ENCODE measurements at regions of chr20 and their contacts with region 1.

Region 1: GRCh38 chr20:44388466-44389023 is 33.0 kb downstream of the HNF4A start:
- DNase-seq: peak; percentile 69 to 84
- ATAC-seq: peak; percentile 77 to 87
- H3K4me3 ChIP-seq: no peak overlapping the region
- H3K27ac ChIP-seq: peak overlapping the region; percentile 55 to 73
- H3K4me1 ChIP-seq: peaks cover 64% of the 10 kb centered on the region
- CTCF ChIP-seq: peak; percentile 93
- EP300 ChIP-seq: no peak
- POLR2A ChIP-seq: no peak
- RAD21 ChIP-seq: peak; percentile 91 to 95

Region 2: DNA sequence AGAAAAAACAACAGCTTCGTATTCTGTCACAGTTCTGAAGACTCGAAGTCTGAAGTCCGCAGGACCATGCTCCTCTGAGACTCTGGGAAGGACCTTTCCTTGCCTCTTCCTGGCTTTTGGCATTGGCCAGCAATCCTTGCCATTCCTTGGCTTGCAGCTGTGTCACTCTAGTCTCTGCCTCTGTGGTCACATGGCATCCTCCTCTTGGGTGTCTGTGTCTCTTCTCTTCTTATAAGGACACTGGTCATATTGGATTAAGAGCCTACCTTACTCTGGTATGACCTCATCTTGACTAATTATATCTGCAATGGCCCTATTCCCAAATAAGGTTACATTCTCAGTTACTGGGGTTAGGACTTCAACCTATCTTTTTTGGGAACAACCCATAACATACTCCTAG is 611.9 kb before region 1 on chr20:
- CTCF ChIA-PET with region 1: no interaction called
- POLR2A ChIA-PET with region 1: no interaction called
- DNase-seq: no peak
- ATAC-seq: no peak
- H3K4me3 ChIP-seq: no peak overlapping the region
- H3K27ac ChIP-seq: no peak overlapping the region
- H3K4me1 ChIP-seq: no peaks in the 10 kb centered on the region
- CTCF ChIP-seq: no peak
- EP300 ChIP-seq: no peak
- POLR2A ChIP-seq: no peak
- RAD21 ChIP-seq: no peak

Region 3: DNA sequence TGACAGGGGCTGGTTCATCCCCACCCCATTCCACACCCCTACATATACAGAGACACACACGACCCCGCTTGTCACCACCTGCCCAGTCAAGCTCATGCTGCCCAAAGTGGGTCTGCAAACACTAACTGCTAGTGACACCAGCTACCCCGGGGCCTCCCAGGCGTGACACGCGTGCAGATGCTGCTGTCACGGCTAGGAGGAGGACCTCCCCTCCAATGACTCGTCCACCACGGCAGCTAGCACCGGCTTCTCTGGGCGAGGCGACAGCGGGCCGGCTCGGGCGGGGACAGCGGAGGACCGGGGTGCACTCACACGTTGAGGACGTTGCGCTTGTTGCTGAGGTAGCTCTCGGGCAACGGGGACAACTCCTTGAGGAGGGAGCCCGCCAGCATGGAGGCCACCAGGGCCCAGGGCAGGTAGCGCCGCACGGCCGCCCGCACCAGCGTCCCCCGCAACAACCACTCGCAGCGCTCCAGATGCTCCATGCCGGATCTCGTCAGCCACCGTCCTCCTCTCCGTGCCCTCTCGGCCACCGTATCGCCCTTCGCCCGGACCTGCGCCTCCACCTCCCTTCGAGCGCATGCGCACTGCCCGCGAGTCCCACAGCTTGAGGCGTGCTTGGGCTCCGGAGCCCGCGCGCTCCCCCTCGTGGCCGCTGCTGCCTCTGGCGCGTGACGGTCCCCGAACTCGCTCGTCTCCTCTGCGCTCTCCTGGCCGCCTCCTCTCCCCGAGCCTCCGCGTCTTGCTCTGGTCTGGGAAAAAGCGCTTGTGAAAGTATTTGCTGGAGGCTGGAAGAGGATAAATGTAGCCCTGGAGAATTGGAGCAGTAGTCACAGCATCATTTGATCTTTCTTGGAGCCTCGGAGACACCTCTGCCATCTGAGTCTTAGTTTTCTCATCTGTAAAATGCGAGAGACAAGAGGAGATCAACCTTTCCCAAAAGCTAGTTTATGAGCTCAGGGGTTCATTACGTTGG is 77.6 kb before region 1 on chr20 and contains the start of gene FITM2:
- CTCF ChIA-PET with region 1: interaction called, 69 read pairs
- POLR2A ChIA-PET with region 1: no interaction called
- DNase-seq: peak; percentile 96 to 98
- ATAC-seq: peak; percentile 95 to 98
- H3K4me3 ChIP-seq: peak within 1 kb of the TSS; percentile 89
- H3K27ac ChIP-seq: peak within 1 kb of the TSS; percentile 92 to 95
- H3K4me1 ChIP-seq: peaks cover 7% of the 10 kb centered on the region; the same call in 2 of the 3 replicates
- CTCF ChIP-seq: peak; percentile 89
- EP300 ChIP-seq: no peak
- POLR2A ChIP-seq: peak; percentile 88
- RAD21 ChIP-seq: peak; percentile 79 to 88
- polyA plus RNA-seq, gene FITM2: 13.1 and 15.2 TPM in 2 replicates

Region 4: DNA sequence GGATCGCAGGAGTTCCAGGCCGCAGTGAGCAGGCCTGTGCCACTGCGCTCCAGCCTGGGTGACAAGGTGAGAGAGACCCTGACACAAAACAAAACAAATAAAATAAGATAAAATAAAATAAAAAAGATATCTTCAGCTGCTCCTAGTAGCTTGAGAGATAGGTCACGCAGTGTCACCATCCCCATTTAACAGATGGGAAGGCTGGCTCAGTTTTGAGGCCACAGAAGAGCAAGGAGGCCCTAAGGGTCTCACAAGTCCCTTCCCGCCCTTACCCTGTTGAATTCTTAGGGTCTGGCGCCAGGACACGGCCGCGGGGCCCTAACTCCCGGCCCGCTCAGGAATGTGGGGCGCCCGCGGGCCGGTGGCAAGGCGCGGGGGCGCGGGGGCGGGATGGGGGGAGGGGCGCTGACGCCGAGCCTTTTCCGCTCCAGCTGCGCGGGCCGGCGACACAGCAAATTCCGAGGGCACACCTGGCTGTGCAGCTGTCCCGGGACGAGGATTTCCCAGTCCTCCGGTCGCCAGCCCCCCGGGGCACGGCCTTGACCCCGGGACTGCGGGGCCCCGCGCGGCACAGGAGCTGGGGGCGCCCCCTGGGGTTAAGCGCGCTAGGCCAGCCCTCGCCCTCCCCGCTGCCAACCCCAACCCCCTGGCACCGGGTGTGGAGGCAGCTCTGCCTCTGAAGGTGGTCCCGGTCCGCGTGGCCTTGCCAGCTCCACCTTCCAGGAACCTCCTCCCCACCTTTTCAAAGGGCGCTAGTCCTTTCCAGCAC is 62.0 kb before region 1 on chr20:
- CTCF ChIA-PET with region 1: interaction called, 28 read pairs
- POLR2A ChIA-PET with region 1: no interaction called
- DNase-seq: no peak
- ATAC-seq: peak in 1 of 2 experiments; percentile 28; a peak in 1 of 6 replicates
- H3K4me3 ChIP-seq: peak overlapping the region; percentile 24
- H3K27ac ChIP-seq: peak overlapping the region; percentile 61 to 78
- H3K4me1 ChIP-seq: peaks cover 14% of the 10 kb centered on the region
- CTCF ChIP-seq: no peak; the same call in 2 of the 3 replicates
- EP300 ChIP-seq: no peak
- POLR2A ChIP-seq: no peak
- RAD21 ChIP-seq: no peak

Region 5: GRCh38 chr20:44370639-44371220 is 17.8 kb before region 1 on chr20:
- CTCF ChIA-PET with region 1: interaction called, 81 read pairs
- POLR2A ChIA-PET with region 1: no interaction called
- DNase-seq: peak; percentile 90 to 97
- ATAC-seq: peak; percentile 99 to 100
- H3K4me3 ChIP-seq: no peak overlapping the region
- H3K27ac ChIP-seq: peak overlapping the region; percentile 90 to 95
- H3K4me1 ChIP-seq: peaks cover 61% of the 10 kb centered on the region
- CTCF ChIP-seq: no peak
- EP300 ChIP-seq: peak; percentile 72
- POLR2A ChIP-seq: peak; percentile 32; the same call in 1 of the 2 replicates
- RAD21 ChIP-seq: peak in 1 of 2 experiments; percentile 18; a peak in 2 of 5 replicates

Region 6: GRCh38 chr20:44460795-44461141 is 72.2 kb after region 1 on chr20:
- CTCF ChIA-PET with region 1: interaction called, 43 read pairs
- POLR2A ChIA-PET with region 1: no interaction called
- DNase-seq: peak; percentile 45 to 49
- ATAC-seq: peak; percentile 72 to 87; a peak in 5 of 6 replicates
- H3K4me3 ChIP-seq: no peak overlapping the region
- H3K27ac ChIP-seq: peak overlapping the region; percentile 2 to 49; a peak in 2 of 6 replicates
- H3K4me1 ChIP-seq: peaks cover 10% of the 10 kb centered on the region; the same call in 1 of the 3 replicates
- CTCF ChIP-seq: peak; percentile 81
- EP300 ChIP-seq: no peak
- POLR2A ChIP-seq: no peak
- RAD21 ChIP-seq: peak; percentile 82 to 84

Region 7: DNA sequence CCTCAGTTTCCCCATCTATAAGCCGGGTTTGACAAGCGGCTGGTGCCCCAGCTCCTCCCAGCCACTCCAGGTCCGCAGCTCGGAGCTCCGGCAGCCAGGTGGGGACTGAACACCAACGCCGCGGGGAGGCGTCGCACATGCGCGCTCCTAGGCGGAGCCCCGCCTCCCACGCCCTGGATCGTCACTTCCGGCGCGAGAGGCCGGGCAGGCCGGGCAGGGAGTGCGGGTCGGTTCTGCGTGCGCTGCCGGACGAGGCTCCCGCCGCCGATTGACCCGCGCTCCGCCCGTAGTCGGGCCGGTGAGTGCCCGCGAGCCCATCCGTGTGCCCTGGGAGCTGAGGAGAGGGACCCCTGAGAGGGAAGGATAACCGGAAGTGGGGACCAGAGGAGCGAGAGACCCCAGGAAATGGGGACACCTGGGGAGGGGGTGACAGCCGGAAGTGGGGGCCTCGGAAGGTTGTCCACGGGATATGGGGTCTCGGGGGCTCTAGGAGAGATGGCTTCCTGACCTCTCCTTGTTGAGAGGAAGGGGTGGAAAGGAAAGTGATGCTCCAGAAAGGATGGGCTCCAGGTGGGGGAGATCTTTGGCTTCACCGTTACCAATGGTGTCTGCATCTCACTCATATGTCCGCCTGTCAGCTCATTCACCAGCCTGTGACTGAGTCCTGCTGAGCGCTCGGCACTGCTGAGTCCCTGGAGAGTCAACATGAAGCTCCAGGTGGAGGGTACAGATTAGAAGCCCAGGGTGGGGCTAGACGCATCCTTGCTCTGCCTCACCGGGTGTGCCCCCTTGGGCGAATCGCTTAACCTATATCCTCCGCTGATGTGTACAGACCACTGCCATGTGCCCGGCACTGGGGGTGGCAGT is 87.4 kb after region 1 on chr20 and contains the start of gene TTPAL:
- CTCF ChIA-PET with region 1: interaction called, 37 read pairs
- POLR2A ChIA-PET with region 1: interaction called, 6 read pairs
- DNase-seq: peak; percentile 81 to 88
- ATAC-seq: peak; percentile 98
- H3K4me3 ChIP-seq: peak within 1 kb of the TSS; percentile 92
- H3K27ac ChIP-seq: peak within 1 kb of the TSS; percentile 91 to 95
- H3K4me1 ChIP-seq: peaks cover 12% of the 10 kb centered on the region; the same call in 2 of the 3 replicates
- CTCF ChIP-seq: peak; percentile 20; the same call in 2 of the 3 replicates
- EP300 ChIP-seq: no peak
- POLR2A ChIP-seq: peak; percentile 99
- RAD21 ChIP-seq: peak; percentile 9 to 48; a peak in 2 of 5 replicates
- polyA plus RNA-seq, gene TTPAL: 9.2 and 11.0 TPM in 2 replicates

Region 8: DNA sequence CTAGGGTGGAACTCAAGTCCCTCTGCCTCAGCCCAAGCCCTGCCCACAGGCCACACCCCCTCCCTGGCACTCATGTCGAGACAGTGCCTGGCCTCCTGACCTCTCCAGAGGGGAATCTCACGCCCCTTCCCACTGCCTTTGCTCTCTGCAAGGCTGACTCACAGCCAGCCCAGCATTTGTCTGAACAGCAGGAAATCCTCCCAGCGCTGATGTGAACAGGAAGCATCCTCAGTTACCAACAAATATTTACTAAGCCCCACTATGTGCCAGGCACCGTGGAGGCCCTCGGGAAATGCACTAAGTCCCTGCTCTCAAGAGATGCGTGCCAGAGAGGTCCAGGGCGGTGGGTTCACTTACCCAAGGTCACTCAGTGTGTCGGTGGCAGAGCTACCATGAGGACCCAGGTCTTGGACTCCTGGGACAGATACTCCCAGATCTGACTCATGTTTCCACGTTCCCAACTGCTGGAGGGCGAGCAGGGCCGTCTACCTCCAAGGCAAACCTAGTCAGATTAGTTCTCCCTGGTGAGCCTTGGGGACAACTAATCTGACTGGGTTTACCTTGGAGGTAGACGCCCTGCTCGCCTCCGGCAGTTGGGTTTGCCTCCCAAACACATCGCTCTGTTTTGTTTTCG is 255.2 kb after region 1 on chr20:
- CTCF ChIA-PET with region 1: no interaction called
- POLR2A ChIA-PET with region 1: no interaction called
- DNase-seq: peak; percentile 62 to 93
- ATAC-seq: peak; percentile 78 to 90
- H3K4me3 ChIP-seq: no peak overlapping the region
- H3K27ac ChIP-seq: peak overlapping the region; percentile 83 to 94
- H3K4me1 ChIP-seq: peaks cover 55% of the 10 kb centered on the region
- CTCF ChIP-seq: no peak
- EP300 ChIP-seq: no peak
- POLR2A ChIP-seq: no peak; the same call in 1 of the 2 replicates
- RAD21 ChIP-seq: no peak

Measured in A549 (cell line).